ENCODE measurements at regions of chr2 and their contacts with region 1.

Region 1: DNA sequence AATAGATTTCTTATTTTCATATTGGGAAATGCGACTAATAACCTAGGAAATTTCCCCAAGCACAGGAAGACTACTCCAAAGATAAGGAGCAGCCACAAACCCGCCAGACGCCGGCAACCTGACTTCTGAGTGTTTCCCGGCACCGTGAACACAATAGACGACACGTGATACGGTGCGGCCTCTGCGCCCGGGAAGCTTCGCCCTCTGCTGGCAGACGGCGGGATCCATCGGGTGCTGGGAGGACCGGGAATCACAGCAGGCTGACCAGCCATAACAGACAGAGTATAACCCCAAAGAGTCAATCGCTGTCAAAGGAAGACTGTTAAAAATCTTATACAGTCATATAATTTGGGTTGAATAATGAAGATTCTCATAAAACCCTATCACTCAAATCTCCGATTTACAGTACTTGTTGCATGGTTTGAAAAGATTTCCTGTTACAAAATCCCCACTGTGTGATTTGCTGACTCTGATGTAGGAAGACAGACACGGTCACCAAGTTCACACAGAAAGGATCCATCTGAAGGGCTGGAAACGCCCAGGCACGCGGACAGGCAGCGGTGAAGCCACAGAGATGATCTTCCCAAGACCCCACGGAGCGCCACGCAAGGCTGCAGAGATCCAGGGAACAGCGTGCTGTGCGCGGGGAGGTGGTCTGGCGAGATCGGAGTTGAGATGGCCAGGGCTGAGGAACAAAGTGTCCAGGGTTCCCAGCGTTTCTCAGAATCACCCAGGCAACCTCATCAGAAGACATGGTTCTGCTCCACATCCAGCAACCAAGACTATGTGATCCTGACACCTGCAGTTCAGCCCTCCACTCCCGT is 73.8 kb downstream of the EIPR1 start:
- DNase-seq: peak; percentile 87
- H3K4me3 ChIP-seq: no peak overlapping the region
- H3K27ac ChIP-seq: no peak overlapping the region
- H3K4me1 ChIP-seq: peaks cover 2% of the 10 kb centered on the region
- H3K27me3 ChIP-seq: no peaks in the 10 kb centered on the region
- CTCF ChIP-seq: peak; percentile 89 to 97 (median 96)
- POLR2A ChIP-seq: no peak

Region 2: GRCh38 chr2:1854729-1855547 is 1448.9 kb before region 1 on chr2:
- intact Hi-C with region 1: loop called (anchors 5 kb)
- DNase-seq: no peak
- H3K4me3 ChIP-seq: no peak overlapping the region
- H3K27ac ChIP-seq: no peak overlapping the region
- H3K4me1 ChIP-seq: no peaks in the 10 kb centered on the region
- H3K27me3 ChIP-seq: peaks cover 7% of the 10 kb centered on the region
- CTCF ChIP-seq: peak in 1 of 4 experiments; percentile 18
- POLR2A ChIP-seq: no peak

Region 3: GRCh38 chr2:2787301-2787907 is 516.4 kb before region 1 on chr2:
- intact Hi-C with region 1: no loop called
- DNase-seq: no peak
- H3K4me3 ChIP-seq: no peak overlapping the region
- H3K27ac ChIP-seq: no peak overlapping the region
- H3K4me1 ChIP-seq: no peaks in the 10 kb centered on the region
- H3K27me3 ChIP-seq: no peaks in the 10 kb centered on the region
- CTCF ChIP-seq: no peak
- POLR2A ChIP-seq: no peak

Region 4: GRCh38 chr2:2926009-2926857 is 377.6 kb before region 1 on chr2:
- intact Hi-C with region 1: no loop called
- DNase-seq: no peak
- H3K4me3 ChIP-seq: no peak overlapping the region
- H3K27ac ChIP-seq: no peak overlapping the region
- H3K4me1 ChIP-seq: no peaks in the 10 kb centered on the region
- H3K27me3 ChIP-seq: no peaks in the 10 kb centered on the region
- CTCF ChIP-seq: no peak
- POLR2A ChIP-seq: no peak

Region 5: DNA sequence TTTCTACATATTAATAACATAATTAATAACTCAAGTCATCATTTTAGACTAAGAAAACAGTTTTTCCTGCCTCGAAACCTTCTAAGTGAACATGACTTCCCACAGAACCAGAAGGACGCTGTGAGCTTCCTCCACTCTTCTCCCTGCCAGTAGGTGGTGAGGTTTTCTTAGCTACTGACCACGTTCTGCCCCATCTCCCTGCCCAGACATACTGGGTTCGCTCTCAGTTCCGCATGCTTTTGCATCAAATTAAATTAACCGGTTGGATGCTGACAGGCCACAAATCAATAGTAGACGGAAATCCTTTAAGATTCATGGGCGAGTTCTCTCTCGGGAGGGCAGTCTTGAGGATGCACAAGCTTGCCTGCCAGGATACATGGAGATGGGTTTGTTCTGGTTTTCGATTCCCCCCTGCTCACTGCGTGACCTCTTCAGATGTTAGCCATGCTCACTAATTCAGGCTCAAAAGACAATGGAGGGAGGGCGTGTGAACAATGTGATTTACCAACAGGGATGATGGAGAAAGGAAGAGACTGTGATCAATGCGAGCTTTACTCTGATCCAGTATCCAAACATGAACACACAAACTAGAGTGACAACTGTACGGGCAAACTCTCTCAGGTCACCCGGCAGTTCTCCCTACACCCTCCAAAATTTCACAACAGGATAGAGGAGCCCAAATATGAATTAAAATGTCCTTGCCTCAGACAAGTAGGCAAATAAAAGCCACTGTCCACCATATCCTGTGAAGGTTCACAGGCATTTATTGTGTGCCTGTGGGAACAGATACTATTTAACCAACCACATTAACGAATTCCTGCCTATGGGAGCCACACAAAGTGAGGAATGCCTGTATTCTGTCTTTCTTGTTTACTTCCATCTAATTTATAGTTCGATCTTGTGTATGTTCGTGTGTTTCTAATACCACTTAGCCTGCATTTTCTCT is 301.9 kb before region 1 on chr2:
- intact Hi-C with region 1: loop called (anchors 10 kb)
- DNase-seq: peak; percentile 22
- H3K4me3 ChIP-seq: no peak overlapping the region
- H3K27ac ChIP-seq: no peak overlapping the region
- H3K4me1 ChIP-seq: no peaks in the 10 kb centered on the region
- H3K27me3 ChIP-seq: no peaks in the 10 kb centered on the region
- CTCF ChIP-seq: peak in 3 of 4 experiments; percentile 20 to 56 (median 39)
- POLR2A ChIP-seq: no peak

Region 6: DNA sequence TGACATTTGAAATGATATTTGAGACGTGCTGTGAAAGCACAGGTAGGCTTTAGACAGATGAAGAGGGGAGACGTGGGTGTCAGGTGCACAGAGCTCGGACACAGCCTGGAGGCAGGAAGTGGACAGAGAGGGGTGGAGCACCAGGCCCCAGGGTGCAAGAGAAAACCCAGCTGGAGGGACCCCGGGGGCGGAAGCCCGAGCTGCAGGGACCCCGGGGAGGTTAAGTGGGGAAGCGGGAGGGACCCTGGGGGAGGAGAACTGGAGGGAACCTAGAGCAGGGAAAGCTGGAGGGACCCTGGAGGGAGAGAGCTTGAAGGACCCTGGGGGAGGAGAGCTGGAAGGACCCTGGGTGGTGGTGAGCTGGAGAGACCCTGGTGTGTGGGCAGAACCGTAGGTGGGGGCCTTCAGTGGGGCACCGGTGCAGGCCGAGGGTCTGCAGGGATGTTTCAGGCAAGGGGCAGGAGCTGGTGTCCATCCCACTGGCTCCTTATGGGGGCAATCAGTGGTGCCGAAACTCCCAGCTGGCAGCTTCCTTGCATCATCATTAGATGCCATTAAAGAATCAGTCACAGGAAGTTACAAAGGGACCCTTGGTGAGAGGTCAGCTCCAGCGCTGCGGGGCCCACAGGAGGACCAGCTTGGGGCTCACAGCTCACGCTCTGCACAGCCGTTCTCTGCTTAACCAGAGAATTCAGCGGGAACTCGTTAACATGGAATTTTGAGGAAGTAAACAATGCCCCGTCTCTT is 172.7 kb before region 1 on chr2:
- intact Hi-C with region 1: no loop called
- DNase-seq: no peak
- H3K4me3 ChIP-seq: no peak overlapping the region
- H3K27ac ChIP-seq: no peak overlapping the region
- H3K4me1 ChIP-seq: no peaks in the 10 kb centered on the region
- H3K27me3 ChIP-seq: no peaks in the 10 kb centered on the region
- CTCF ChIP-seq: no peak
- POLR2A ChIP-seq: no peak

Region 7: GRCh38 chr2:3334392-3335345 is 30.9 kb after region 1 on chr2:
- intact Hi-C with region 1: no loop called
- DNase-seq: no peak
- H3K4me3 ChIP-seq: no peak overlapping the region
- H3K27ac ChIP-seq: no peak overlapping the region
- H3K4me1 ChIP-seq: no peaks in the 10 kb centered on the region
- H3K27me3 ChIP-seq: no peaks in the 10 kb centered on the region
- CTCF ChIP-seq: no peak
- POLR2A ChIP-seq: no peak

Region 8: DNA sequence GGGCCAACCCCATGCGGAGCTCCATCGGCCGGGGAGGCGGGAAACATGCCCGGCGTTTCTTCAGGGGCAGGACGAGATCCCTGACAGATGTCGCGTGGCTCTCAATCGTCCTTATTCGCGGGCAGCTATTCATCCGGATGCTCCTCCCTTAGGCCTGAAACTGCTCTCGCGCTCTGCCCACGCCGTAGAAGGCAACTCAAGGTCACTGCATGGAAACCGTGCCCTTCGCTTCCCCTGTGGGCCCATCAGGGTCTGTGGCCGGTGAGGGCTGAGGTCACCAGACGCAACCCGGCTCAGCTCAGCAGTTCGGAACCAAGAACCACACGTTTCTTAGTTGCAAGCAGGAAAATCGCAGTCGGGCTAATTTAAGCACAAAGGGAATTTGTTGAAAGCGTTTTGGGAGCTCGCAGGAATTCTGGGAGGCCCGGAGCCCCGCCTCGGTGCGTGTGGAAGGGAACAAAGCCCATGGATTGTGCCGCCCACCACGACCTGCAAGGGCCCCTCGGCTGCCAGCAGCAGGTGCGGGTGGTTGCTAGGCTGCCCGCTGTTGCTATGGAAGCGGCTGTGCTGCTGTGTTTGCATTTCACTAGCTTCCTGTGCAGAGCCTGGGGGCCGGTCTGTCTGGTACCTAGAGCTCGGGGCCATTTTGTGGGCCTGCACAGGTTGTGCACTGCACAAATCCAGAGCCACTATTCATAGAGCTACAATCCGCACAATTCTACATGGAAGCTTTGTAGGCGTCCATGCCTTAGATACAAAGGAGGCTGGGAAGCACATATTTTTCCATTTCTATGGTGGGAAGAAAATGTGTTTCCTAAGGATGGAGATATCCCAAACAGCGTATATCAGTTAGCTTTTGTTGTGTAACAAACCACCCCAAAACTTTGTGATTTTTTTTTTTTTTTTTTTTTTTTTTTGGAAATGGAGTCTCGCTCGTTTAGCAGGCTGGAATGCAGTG is 348.2 kb after region 1 on chr2:
- intact Hi-C with region 1: loop called (anchors 5 kb)
- DNase-seq: peak; percentile 46
- H3K4me3 ChIP-seq: no peak overlapping the region
- H3K27ac ChIP-seq: peak overlapping the region in 1 of 2 donors; percentile 30
- H3K4me1 ChIP-seq: no peaks in the 10 kb centered on the region
- H3K27me3 ChIP-seq: no peaks in the 10 kb centered on the region
- CTCF ChIP-seq: no peak
- POLR2A ChIP-seq: no peak